ENCODE measurements at regions of chr6 and their contacts with region 1.

Region 1: GRCh38 chr6:117976030-117976651 is 69.1 kb downstream of the SLC35F1 start:
- DNase-seq: no peak
- H3K4me3 Mint-ChIP-seq: no peak overlapping the region
- H3K27ac Mint-ChIP-seq: no peak overlapping the region
- H3K4me1 Mint-ChIP-seq: no peaks in the 10 kb centered on the region
- H3K27me3 Mint-ChIP-seq: peaks cover 7% of the 10 kb centered on the region

Region 2: GRCh38 chr6:117167520-117168271 is 808.4 kb before region 1 on chr6:
- intact Hi-C with region 1: loop called (anchors 5 kb)
- DNase-seq: no peak
- H3K4me3 Mint-ChIP-seq: no peak overlapping the region
- H3K27ac Mint-ChIP-seq: no peak overlapping the region
- H3K4me1 Mint-ChIP-seq: no peaks in the 10 kb centered on the region
- H3K27me3 Mint-ChIP-seq: no peaks in the 10 kb centered on the region

Region 3: DNA sequence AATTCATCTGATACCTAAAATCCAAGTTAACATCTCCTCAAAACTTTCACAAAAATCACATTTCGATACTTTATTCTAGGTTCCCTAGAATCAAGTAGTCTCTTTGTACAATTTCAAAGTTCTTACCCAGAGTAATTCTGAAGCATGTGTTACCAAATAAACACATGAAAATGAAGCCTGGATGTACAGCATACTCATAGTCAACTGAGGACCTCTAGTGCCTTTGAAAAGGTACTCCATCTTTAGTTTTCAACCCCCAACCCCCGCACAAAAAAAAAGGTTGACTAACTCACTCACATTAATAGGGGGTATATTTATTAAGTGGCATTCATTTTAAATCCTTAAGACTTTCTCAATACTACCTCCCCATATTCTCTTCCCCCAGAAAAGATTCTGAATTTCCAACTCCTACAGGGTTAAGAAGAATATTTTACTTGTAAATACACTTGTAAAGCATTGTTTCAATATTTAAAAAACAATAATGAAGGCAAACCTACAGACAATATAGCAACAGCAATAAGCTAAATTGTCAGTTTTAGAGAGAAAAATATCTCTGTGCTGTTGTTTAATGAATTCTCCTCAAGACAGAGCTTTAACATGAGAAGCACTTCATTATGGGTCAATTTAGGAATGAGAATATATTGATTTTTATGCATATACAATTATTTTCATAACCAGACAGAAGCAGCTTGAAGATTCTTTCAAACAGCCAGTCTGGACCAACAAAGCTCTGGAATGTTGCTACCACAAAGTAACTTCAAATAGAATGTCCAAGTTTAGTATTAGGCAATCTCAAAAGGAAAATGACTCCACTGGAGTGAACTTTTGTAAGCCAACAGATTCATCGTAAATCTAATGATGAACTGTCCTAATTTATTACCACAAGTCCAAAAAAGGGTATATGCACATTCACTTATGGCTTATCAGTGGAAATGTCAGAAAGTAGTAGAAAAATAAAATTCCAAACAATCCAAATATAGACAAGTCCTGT is 575.2 kb after region 1 on chr6:
- intact Hi-C with region 1: loop called (anchors 1 kb)
- DNase-seq: no peak
- H3K4me3 Mint-ChIP-seq: no peak overlapping the region
- H3K27ac Mint-ChIP-seq: no peak overlapping the region
- H3K4me1 Mint-ChIP-seq: peaks cover 17% of the 10 kb centered on the region
- H3K27me3 Mint-ChIP-seq: no peaks in the 10 kb centered on the region

Region 4: DNA sequence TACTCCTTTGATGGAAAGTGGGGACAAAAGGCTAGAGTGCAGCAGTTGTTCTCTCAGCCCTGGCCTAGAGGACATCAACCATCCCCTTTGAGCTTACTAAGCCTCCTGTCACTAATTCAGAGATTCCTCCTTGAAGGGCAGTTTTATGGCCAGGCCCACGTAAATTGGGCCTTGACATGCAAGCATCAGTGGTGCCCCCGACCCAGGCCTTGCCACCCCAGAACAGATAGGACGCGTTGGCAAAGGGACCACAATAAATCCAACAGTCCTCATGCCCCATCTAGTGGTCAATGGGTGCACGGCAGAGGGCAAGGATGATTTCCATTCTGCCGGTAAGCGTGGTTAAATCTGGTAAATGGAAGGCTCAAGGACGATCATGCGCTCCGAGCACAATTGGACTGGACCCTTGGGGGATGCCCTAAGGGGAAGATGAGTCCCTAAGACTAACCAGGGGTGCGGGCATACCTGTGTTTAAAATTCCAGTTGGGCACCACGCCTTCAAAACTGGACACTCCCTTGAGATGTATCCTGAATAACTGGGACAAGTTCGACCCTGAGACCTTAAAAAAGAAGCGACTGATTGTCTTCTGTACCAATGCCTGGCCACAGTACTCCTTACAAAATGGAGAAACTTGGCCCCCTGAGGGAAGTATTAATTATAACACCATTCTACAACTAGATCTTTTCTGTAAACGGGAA is 642.7 kb after region 1 on chr6:
- intact Hi-C with region 1: loop called (anchors 10 kb)
- DNase-seq: peak; percentile 30
- H3K4me3 Mint-ChIP-seq: no peak overlapping the region
- H3K27ac Mint-ChIP-seq: peak overlapping the region; percentile 55
- H3K4me1 Mint-ChIP-seq: peaks cover 29% of the 10 kb centered on the region
- H3K27me3 Mint-ChIP-seq: no peaks in the 10 kb centered on the region